CD4-positive, alpha-beta T cell (primary cell): ENCODE measurements at regions of chr3 and their contacts with region 1.

Region 1: DNA sequence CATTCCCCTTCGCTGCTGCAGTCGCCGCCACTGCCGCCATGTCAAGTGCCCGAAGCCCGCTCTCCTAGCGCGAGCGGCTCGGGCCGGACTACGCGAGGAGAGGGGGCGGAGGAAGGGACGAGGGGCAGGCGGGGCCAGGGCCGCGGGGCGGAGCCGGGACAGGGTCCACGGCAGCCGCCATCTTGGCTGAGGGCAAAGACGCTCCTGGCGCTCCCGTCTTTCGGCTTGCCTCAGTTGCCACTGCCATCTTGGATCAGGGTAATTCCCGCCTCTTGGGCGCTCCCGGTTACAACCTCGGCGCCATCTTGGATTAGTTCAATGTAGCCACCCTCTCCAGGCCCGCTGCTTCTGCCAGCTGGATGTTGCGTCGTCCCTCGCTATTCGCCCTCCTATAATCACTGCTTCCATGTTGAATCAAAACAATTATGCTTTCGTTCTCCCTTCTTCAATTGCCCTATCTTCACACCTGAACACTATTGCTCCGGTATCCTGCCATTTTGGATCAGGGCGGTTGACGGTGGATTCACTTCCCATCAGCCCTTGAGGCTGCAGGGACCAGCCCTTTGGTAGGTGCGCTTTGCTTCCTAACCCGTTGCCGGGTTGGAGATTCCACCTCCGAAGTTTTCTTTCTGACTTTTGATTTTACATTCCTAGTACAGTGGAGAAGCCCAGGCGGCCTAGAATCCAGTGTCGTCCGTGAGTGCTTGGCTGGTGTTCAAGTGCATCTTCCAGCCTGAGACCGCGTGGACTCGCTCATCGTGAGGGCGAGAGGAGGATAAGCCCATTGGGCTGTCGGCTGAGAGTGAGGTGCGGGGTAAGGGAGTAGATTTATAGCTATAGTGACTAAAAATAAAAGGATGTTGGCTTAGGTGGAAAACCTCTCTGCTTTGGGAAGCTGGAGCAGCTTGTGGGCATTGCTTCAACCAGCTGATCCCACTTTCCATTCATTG is at the start of gene HACD2:
- DNase-seq: peak; percentile 85 to 98 (median 92)
- ATAC-seq: peak; percentile 93
- H3K4me3 ChIP-seq: peak within 1 kb of the TSS; percentile 79
- H3K4me3 Mint-ChIP-seq: peak within 1 kb of the TSS; percentile 95
- H3K27ac ChIP-seq: peak within 1 kb of the TSS; percentile 84 to 92
- H3K27ac Mint-ChIP-seq: peak within 1 kb of the TSS; percentile 89
- H3K4me1 ChIP-seq: peaks cover 16% of the 10 kb centered on the region
- H3K4me1 Mint-ChIP-seq: peaks cover 25% of the 10 kb centered on the region
- H3K27me3 ChIP-seq: no peaks in the 10 kb centered on the region
- H3K27me3 Mint-ChIP-seq: no peaks in the 10 kb centered on the region
- CTCF ChIP-seq: no peak
- total RNA-seq, gene HACD2: 12.1 to 13.3 TPM

Region 2: DNA sequence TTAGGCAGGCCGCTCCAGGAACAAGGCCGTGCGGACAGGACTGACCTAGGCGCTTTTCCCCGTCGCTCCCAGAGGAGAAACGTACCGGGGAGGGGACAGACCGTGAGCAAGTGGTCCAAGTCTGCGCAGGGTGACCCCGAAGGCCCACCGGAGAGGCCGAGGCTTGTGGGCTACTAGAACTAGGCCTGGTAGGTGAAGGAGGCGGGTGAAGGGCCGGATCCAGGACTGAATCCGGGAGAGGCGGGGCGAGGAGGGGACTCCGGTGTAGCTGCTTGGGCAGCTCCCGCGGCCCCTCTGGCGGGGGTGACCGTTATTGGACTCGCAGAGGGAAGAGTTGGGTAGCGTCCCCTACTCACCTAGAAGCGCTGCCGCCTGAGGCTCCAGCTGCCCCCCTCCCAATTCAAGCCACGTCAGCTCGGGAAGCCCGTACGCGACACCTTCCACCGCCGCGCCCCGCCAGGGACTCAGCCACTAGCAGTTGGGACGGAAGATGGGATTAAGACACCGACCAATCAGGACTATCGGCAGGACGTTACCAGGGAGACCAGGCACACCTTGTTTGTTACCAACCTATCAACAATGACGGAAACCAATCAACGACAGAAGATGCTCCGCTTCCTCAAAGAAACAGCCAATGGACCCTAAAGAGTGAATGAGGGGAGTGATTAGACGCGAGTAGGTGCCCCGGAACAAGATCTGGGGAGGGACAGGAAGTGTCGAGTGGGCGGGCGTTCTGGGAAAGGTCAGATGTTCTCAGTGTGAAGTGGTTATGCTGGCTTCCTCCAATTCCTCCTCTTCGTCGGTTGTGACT is 1835.8 kb before region 1 on chr3 and contains the start of gene GOLGB1:
- CTCF ChIA-PET with region 1: no interaction called
- POLR2A ChIA-PET with region 1: no interaction called
- intact Hi-C with region 1: loop called in 1 of 2 experiments (anchors 10 kb)
- DNase-seq: peak; percentile 80 to 99 (median 86)
- ATAC-seq: peak; percentile 95
- H3K4me3 ChIP-seq: peak within 1 kb of the TSS; percentile 77
- H3K4me3 Mint-ChIP-seq: no peak within 1 kb of the TSS
- H3K27ac ChIP-seq: peak within 1 kb of the TSS; percentile 92 to 96
- H3K27ac Mint-ChIP-seq: no peak within 1 kb of the TSS
- H3K4me1 ChIP-seq: peaks cover 17% of the 10 kb centered on the region
- H3K4me1 Mint-ChIP-seq: peaks cover 5% of the 10 kb centered on the region
- H3K27me3 ChIP-seq: no peaks in the 10 kb centered on the region
- H3K27me3 Mint-ChIP-seq: peaks cover 12% of the 10 kb centered on the region
- CTCF ChIP-seq: no peak
- total RNA-seq, gene GOLGB1: 49.8 to 50.2 TPM

Region 3: GRCh38 chr3:122679085-122679881 is 906.0 kb before region 1 on chr3:
- CTCF ChIA-PET with region 1: no interaction called
- POLR2A ChIA-PET with region 1: no interaction called
- intact Hi-C with region 1: loop called in 1 of 2 experiments (anchors 10 kb)
- DNase-seq: peak; percentile 71 to 92 (median 78)
- ATAC-seq: peak; percentile 68
- H3K4me3 ChIP-seq: peak overlapping the region; percentile 93
- H3K4me3 Mint-ChIP-seq: peak overlapping the region; percentile 93
- H3K27ac ChIP-seq: peak overlapping the region; percentile 88 to 91
- H3K27ac Mint-ChIP-seq: peak overlapping the region; percentile 96
- H3K4me1 ChIP-seq: peaks cover 46% of the 10 kb centered on the region
- H3K4me1 Mint-ChIP-seq: peaks cover 54% of the 10 kb centered on the region
- H3K27me3 ChIP-seq: no peaks in the 10 kb centered on the region
- H3K27me3 Mint-ChIP-seq: no peaks in the 10 kb centered on the region
- CTCF ChIP-seq: peak; percentile 83

Region 4: DNA sequence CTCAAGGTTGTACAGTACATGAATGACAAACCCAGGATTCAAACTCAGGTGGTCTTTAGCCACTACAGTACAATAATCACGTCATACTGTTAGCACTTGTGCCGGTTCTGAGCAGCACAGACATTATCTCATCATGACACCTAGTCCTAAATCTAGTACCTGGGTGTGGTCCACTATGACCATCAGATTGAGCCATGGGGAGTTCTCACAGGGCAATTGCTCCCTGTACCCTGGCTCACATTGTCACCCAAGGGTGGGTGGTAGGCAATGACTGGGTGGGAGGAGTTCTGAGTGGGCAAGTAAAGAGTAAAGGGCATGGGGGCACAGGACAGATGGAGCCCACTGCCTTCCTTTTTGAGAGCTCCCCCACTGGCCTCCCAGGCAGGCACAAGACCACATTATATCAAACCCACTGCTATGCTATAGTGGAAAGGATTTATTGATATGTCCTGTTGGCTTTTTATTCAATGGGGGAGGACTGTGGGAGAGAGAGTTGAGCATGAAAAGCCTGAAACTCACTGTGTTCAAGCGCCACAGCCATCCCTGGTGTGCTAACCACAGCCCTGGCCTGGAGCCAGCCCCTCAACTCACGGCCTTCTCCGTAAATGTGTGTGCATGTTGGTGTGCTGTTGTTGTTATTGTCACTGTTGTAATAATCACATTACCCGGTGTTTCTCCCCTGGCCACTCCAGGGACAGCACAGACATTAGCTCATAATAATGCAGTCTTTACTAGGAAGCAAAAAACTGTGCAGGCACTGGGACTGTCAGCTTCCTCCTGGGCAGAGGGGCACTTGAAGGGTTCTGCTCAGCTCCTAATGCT is 163.7 kb before region 1 on chr3:
- CTCF ChIA-PET with region 1: no interaction called
- POLR2A ChIA-PET with region 1: no interaction called
- intact Hi-C with region 1: no loop called
- DNase-seq: no peak
- ATAC-seq: no peak
- H3K4me3 ChIP-seq: no peak overlapping the region
- H3K4me3 Mint-ChIP-seq: no peak overlapping the region
- H3K27ac ChIP-seq: no peak overlapping the region
- H3K27ac Mint-ChIP-seq: no peak overlapping the region
- H3K4me1 ChIP-seq: no peaks in the 10 kb centered on the region
- H3K4me1 Mint-ChIP-seq: no peaks in the 10 kb centered on the region
- H3K27me3 ChIP-seq: no peaks in the 10 kb centered on the region
- H3K27me3 Mint-ChIP-seq: peaks cover 3% of the 10 kb centered on the region
- CTCF ChIP-seq: no peak

Region 5: DNA sequence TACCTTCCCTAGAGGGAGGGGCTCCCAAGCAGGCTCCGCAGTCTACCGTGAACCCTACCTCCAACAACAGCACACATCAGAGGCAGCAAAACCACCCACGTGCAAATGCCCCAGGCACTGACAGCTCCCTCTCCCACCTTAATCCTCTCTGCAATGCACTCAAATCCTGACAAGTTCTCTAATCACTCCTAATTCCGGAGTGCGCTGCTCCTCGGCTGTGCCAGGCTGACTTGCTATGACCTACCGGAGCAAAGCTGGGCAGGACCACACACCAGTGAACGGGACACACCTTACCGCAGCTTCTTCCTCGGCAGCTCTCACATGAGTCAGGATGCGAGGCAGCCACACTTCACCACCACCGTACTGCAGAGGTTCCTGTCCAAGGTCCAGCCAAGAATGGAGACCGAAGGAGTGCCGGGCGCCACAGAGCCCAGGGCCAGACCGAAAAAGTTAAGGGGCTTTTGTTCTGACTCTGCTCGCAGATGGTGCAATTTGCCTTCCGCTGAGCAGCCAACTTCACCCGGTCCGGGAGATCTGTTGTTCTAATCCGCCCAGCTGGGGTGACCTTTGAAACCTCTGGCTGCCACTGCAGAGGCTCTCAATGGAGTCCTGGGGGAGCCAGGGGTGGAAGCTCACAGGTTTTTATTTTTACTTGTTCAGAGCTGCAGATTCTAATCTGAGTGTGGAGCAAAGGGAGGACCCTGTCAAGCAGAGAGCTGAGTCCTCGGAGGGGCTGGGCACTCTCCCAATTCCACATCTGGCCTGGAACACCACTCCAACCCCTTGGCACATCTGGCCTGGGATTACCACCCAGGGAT is 214.5 kb after region 1 on chr3:
- CTCF ChIA-PET with region 1: no interaction called
- POLR2A ChIA-PET with region 1: no interaction called
- intact Hi-C with region 1: no loop called
- DNase-seq: no peak
- ATAC-seq: no peak
- H3K4me3 ChIP-seq: no peak overlapping the region
- H3K4me3 Mint-ChIP-seq: no peak overlapping the region
- H3K27ac ChIP-seq: no peak overlapping the region
- H3K27ac Mint-ChIP-seq: no peak overlapping the region
- H3K4me1 ChIP-seq: no peaks in the 10 kb centered on the region
- H3K4me1 Mint-ChIP-seq: no peaks in the 10 kb centered on the region
- H3K27me3 ChIP-seq: peaks cover 0 to 6% of the 10 kb centered on the region in 2 experiments
- H3K27me3 Mint-ChIP-seq: peaks cover 4% of the 10 kb centered on the region
- CTCF ChIP-seq: no peak

Region 6: DNA sequence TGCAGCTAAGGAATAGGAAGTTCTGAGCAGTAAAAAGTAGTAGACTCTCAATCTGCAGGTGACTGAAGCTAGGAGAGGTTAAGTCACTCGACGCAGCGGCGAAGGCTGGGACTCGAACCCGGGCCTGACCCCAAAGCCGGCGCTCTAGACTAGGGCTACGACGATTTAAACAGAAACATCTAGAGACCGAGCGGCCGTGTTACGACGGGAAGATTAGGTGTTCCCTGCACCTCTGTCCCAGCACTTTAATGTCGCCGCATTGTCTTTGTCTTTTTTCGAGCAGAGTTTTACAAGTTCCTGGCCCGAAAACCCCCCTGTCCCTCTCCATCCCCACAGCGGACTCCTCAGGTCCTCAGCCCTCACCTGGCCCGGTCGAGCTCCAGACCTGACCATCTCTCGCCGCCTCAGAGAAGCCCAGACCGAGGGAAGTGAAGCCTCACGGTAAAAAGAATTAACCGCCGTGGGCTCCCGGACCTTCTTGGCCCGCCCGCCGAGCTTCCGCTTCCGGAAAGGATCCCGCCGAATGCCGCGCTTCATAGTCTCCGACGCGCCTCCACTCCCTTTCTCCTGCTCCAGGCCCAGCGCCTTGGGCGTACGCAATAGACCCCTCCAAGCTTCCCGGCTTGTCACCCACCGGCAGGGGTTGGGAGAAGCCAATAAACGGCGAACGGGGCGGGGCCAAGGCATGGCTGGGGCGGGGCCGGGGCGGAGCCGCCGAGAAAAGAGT is 375.7 kb after region 1 on chr3 and contains the start of gene CCDC14:
- CTCF ChIA-PET with region 1: no interaction called
- POLR2A ChIA-PET with region 1: no interaction called
- intact Hi-C with region 1: loop called in 1 of 2 experiments (anchors 5 kb)
- DNase-seq: peak; percentile 41 to 85 (median 65)
- ATAC-seq: peak; percentile 93
- H3K4me3 ChIP-seq: peak within 1 kb of the TSS; percentile 93
- H3K4me3 Mint-ChIP-seq: peak within 1 kb of the TSS; percentile 98
- H3K27ac ChIP-seq: peak within 1 kb of the TSS; percentile 9 to 56
- H3K27ac Mint-ChIP-seq: peak within 1 kb of the TSS; percentile 88
- H3K4me1 ChIP-seq: no peaks in the 10 kb centered on the region
- H3K4me1 Mint-ChIP-seq: peaks cover 31% of the 10 kb centered on the region
- H3K27me3 ChIP-seq: no peaks in the 10 kb centered on the region
- H3K27me3 Mint-ChIP-seq: no peaks in the 10 kb centered on the region
- CTCF ChIP-seq: no peak
- total RNA-seq, gene CCDC14: 21.3 to 24.4 TPM